ENCODE measurements at regions of chr2 and their contacts with region 1.

Region 1: DNA sequence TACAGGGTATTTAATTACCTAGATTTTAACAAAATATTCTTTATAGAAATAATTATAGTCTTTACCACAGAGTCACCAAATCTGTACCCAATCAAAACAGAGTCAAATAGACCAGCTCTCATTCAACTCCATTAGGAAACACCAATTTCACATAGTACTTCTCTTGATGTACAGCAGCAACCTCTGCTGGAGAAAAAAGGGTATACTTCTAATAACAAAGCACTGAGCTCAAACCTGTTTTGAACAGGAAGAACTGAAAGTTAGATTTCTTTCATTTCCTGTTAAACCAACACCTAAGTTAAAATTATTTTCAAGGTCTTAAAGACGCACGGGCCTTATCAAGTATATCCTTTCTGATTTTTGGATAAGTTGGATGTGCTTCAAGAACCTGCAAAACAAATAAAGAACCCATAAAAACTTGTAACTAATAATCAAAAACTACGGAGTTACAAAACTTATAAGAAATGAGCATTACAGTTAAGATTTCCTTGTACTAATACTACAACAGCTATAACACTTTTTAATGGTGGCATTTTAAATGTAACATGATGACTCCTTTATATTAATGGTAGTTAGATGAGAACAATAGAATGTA is 79.0 kb downstream of the TTC21B start:
- DNase-seq: peak; percentile 65
- H3K4me3 ChIP-seq: no peak overlapping the region
- H3K27ac ChIP-seq: no peak overlapping the region
- H3K4me1 ChIP-seq: peaks cover 7% of the 10 kb centered on the region
- H3K27me3 ChIP-seq: no peaks in the 10 kb centered on the region
- CTCF ChIP-seq: peak; percentile 37 to 38
- POLR2A ChIP-seq: no peak

Region 2: GRCh38 chr2:165015052-165015642 is 859.4 kb before region 1 on chr2:
- CTCF ChIA-PET with region 1: interaction called, 23 read pairs
- POLR2A ChIA-PET with region 1: no interaction called
- dilution Hi-C with region 1: no loop called
- intact Hi-C with region 1: no loop called
- DNase-seq: peak; percentile 61
- H3K4me3 ChIP-seq: no peak overlapping the region
- H3K27ac ChIP-seq: no peak overlapping the region
- H3K4me1 ChIP-seq: no peaks in the 10 kb centered on the region
- H3K27me3 ChIP-seq: peaks cover 16 to 23% of the 10 kb centered on the region in 2 experiments
- CTCF ChIP-seq: peak; percentile 78 to 91
- POLR2A ChIP-seq: no peak

Region 3: GRCh38 chr2:165401285-165401852 is 473.2 kb before region 1 on chr2:
- CTCF ChIA-PET with region 1: interaction called, 48 read pairs
- POLR2A ChIA-PET with region 1: no interaction called
- dilution Hi-C with region 1: no loop called
- intact Hi-C with region 1: loop called (anchors 1 kb)
- DNase-seq: peak; percentile 77
- H3K4me3 ChIP-seq: no peak overlapping the region
- H3K27ac ChIP-seq: no peak overlapping the region
- H3K4me1 ChIP-seq: no peaks in the 10 kb centered on the region
- H3K27me3 ChIP-seq: peaks cover 22 to 30% of the 10 kb centered on the region in 2 experiments
- CTCF ChIP-seq: peak; percentile 43 to 46
- POLR2A ChIP-seq: no peak

Region 4: GRCh38 chr2:165778653-165779451 is 95.7 kb before region 1 on chr2:
- CTCF ChIA-PET with region 1: interaction called, 16 read pairs
- POLR2A ChIA-PET with region 1: no interaction called
- dilution Hi-C with region 1: no loop called
- intact Hi-C with region 1: no loop called
- DNase-seq: peak; percentile 7
- H3K4me3 ChIP-seq: no peak overlapping the region
- H3K27ac ChIP-seq: no peak overlapping the region
- H3K4me1 ChIP-seq: no peaks in the 10 kb centered on the region
- H3K27me3 ChIP-seq: no peaks in the 10 kb centered on the region
- CTCF ChIP-seq: peak; percentile 20 to 23
- POLR2A ChIP-seq: no peak

Region 5: DNA sequence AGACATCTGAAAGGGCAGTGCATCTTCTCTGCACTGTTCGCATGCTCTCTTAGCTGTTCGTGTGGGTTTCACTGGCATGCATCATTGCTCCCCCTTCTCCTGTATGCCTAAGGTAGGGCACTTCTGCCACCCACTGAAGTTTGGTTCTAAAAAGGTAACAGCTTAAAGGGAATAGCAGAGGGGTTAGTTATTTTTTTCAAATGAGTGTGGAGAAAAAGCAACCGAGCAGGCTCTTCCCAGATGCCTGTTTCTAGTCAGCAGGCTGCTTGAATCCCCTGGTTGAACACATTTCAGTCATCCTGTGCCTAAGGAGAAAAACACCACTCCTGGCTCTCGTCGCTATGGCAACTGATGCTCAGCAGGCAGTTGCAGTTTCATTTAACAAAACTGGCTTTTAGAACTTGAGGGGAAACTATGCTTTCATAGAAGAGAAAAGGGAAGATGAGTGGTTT is 10.7 kb before region 1 on chr2:
- CTCF ChIA-PET with region 1: interaction called, 11 read pairs
- POLR2A ChIA-PET with region 1: no interaction called
- dilution Hi-C with region 1: no loop called
- intact Hi-C with region 1: no loop called
- DNase-seq: no peak
- H3K4me3 ChIP-seq: no peak overlapping the region
- H3K27ac ChIP-seq: no peak overlapping the region
- H3K4me1 ChIP-seq: no peaks in the 10 kb centered on the region
- H3K27me3 ChIP-seq: no peaks in the 10 kb centered on the region
- CTCF ChIP-seq: no peak
- POLR2A ChIP-seq: no peak

Region 6: GRCh38 chr2:165905854-165906253 is 31.3 kb after region 1 on chr2:
- CTCF ChIA-PET with region 1: interaction called, 10 read pairs
- POLR2A ChIA-PET with region 1: no interaction called
- dilution Hi-C with region 1: no loop called
- intact Hi-C with region 1: no loop called
- DNase-seq: peak; percentile 75
- H3K4me3 ChIP-seq: no peak overlapping the region
- H3K27ac ChIP-seq: peak overlapping the region; percentile 7
- H3K4me1 ChIP-seq: peaks cover 36% of the 10 kb centered on the region
- H3K27me3 ChIP-seq: no peaks in the 10 kb centered on the region
- CTCF ChIP-seq: no peak
- POLR2A ChIP-seq: no peak

Region 7: GRCh38 chr2:165969227-165969626 is 94.7 kb after region 1 on chr2:
- CTCF ChIA-PET with region 1: no interaction called
- POLR2A ChIA-PET with region 1: no interaction called
- dilution Hi-C with region 1: no loop called
- intact Hi-C with region 1: no loop called
- DNase-seq: peak; percentile 39
- H3K4me3 ChIP-seq: no peak overlapping the region
- H3K27ac ChIP-seq: no peak overlapping the region
- H3K4me1 ChIP-seq: no peaks in the 10 kb centered on the region
- H3K27me3 ChIP-seq: peaks cover 0 to 1% of the 10 kb centered on the region in 2 experiments
- CTCF ChIP-seq: peak in 1 of 2 donors; percentile 7
- POLR2A ChIP-seq: no peak

Region 8: DNA sequence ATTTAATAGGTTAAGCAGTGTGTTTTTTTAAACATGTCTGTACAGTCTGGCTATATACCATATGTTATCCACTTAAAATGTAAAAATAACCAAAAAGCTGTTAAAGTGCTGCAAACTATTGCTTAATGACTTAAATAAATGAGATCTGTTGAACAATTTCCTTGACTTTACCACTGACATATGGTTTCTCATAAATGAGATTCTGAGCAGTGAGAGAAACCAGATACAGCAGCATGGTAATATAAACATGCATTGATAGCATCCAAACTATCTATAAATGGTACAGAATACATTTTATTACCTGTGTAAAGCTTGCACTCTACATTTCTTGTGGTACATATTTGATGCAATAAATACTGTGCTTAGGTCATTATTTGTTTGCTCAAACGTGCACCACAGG is 115.3 kb after region 1 on chr2:
- CTCF ChIA-PET with region 1: no interaction called
- POLR2A ChIA-PET with region 1: no interaction called
- dilution Hi-C with region 1: no loop called
- intact Hi-C with region 1: no loop called
- DNase-seq: no peak
- H3K4me3 ChIP-seq: no peak overlapping the region
- H3K27ac ChIP-seq: no peak overlapping the region
- H3K4me1 ChIP-seq: no peaks in the 10 kb centered on the region
- H3K27me3 ChIP-seq: no peaks in the 10 kb centered on the region
- CTCF ChIP-seq: no peak
- POLR2A ChIP-seq: no peak

Measured in endothelial cell of umbilical vein (primary cell).